ENCODE measurements at regions of chr5 and their contacts with region 1.

Region 1: GRCh38 chr5:123423278-123424149 is at the start of gene CEP120:
- DNase-seq: peak; percentile 99
- ATAC-seq: peak; percentile 99
- H3K4me3 ChIP-seq: peak within 1 kb of the TSS; percentile 87
- H3K27ac ChIP-seq: peak within 1 kb of the TSS; percentile 68
- H3K4me1 ChIP-seq: no peaks in the 10 kb centered on the region; the same call in 1 of the 2 replicates
- H3K27me3 ChIP-seq: no peaks in the 10 kb centered on the region
- CTCF ChIP-seq: peak; percentile 94
- POLR2A ChIP-seq: peak; percentile 65; the same call in 1 of the 2 replicates
- RAD21 ChIP-seq: peak; percentile 64
- total RNA-seq, gene CEP120: 16.4 and 46.1 TPM in 2 replicates

Region 2: GRCh38 chr5:123028222-123028621 is 395.3 kb before region 1 on chr5:
- CTCF ChIA-PET with region 1: no interaction called
- POLR2A ChIA-PET with region 1: no interaction called
- dilution Hi-C with region 1: no loop called
- in situ Hi-C with region 1: no loop called
- intact Hi-C with region 1: no loop called
- DNase-seq: no peak
- ATAC-seq: no peak
- H3K4me3 ChIP-seq: no peak overlapping the region
- H3K27ac ChIP-seq: no peak overlapping the region
- H3K4me1 ChIP-seq: no peaks in the 10 kb centered on the region
- H3K27me3 ChIP-seq: no peaks in the 10 kb centered on the region
- CTCF ChIP-seq: no peak
- POLR2A ChIP-seq: no peak
- RAD21 ChIP-seq: no peak

Region 3: DNA sequence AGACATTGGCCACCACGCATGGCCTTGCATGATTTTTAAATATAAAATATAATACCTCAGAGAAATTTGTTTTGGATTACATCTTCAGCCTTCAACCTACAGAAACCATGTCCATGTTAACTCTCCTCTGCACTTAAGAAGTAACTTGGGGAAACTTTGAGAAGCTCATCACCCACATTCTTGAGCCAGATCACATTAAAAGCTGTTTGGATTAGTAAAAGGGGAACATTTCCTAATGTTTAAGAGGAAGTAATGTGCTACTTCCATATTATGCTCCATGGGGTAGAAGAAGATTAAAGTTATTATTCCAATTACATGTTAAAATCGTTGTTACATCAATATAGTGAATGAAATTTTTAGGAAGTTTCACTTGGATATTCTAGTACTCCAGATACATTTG is 10.1 kb after region 1 on chr5:
- CTCF ChIA-PET with region 1: interaction called, 12 read pairs
- POLR2A ChIA-PET with region 1: interaction called, 3 read pairs
- dilution Hi-C with region 1: no loop called
- in situ Hi-C with region 1: no loop called
- intact Hi-C with region 1: no loop called
- DNase-seq: no peak
- ATAC-seq: no peak
- H3K4me3 ChIP-seq: no peak overlapping the region
- H3K27ac ChIP-seq: no peak overlapping the region
- H3K4me1 ChIP-seq: peaks cover 4% of the 10 kb centered on the region; the same call in 1 of the 2 replicates
- H3K27me3 ChIP-seq: no peaks in the 10 kb centered on the region
- CTCF ChIP-seq: no peak
- POLR2A ChIP-seq: no peak
- RAD21 ChIP-seq: no peak

Region 4: GRCh38 chr5:123511648-123512605 is 88.4 kb after region 1 on chr5 and contains the start of gene CSNK1G3:
- CTCF ChIA-PET with region 1: interaction called, 7 read pairs
- POLR2A ChIA-PET with region 1: no interaction called
- dilution Hi-C with region 1: no loop called
- in situ Hi-C with region 1: no loop called
- intact Hi-C with region 1: loop called (anchors 1 kb)
- DNase-seq: peak; percentile 97
- ATAC-seq: peak; percentile 96
- H3K4me3 ChIP-seq: peak within 1 kb of the TSS; percentile 74
- H3K27ac ChIP-seq: peak within 1 kb of the TSS; percentile 90
- H3K4me1 ChIP-seq: peaks cover 2% of the 10 kb centered on the region; the same call in 1 of the 2 replicates
- H3K27me3 ChIP-seq: no peaks in the 10 kb centered on the region
- CTCF ChIP-seq: no peak
- POLR2A ChIP-seq: peak; percentile 97
- RAD21 ChIP-seq: no peak
- total RNA-seq, gene CSNK1G3: 26.2 and 45.3 TPM in 2 replicates

Measured in IMR-90 (cell line).